ENCODE measurements at regions of chr20 and their contacts with region 1.

Region 1: GRCh38 chr20:33450867-33451266 is 7.3 kb upstream of the SNTA1 start:
- DNase-seq: no peak
- ATAC-seq: no peak

Region 2: DNA sequence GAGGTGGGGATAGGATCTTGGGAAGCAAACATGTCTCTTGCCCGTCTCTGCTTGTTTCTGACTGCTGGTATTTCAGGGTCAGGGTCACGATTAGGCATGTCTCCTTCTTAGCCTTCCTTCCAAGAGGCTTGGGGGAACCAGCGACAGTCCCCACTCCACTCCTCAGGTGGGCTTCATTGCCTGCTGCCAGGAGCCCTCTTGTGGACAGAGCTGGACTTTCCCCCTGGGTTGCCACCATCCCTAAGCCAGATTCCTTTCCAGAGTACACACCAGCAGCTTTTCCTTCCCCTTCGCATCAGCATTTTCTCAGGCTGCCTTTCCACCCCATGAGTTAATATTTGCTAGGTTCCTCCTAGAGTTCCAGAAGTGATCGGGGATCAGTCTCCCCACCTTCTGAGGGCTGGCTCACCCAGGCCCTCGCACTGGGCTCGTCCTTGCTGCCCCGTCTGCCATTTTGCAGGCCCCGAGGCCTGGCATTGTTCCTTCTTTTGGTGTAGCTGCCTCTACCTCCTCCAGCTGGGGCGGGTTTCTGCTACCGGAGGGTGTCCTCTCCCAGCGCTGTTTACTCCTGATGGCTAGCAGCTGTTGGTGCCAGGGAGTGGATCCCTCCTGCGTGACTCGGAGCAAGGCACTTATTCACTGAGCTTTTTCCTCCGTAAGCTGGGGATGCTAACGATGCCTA is 202.5 kb after region 1 on chr20:
- intact Hi-C with region 1: loop called (anchors 2 kb)
- DNase-seq: peak; percentile 67
- ATAC-seq: peak; percentile 52

Region 3: GRCh38 chr20:33667245-33668086 is 216.6 kb after region 1 on chr20:
- intact Hi-C with region 1: loop called (anchors 2 kb)
- DNase-seq: peak; percentile 87
- ATAC-seq: peak; percentile 59

Region 4: DNA sequence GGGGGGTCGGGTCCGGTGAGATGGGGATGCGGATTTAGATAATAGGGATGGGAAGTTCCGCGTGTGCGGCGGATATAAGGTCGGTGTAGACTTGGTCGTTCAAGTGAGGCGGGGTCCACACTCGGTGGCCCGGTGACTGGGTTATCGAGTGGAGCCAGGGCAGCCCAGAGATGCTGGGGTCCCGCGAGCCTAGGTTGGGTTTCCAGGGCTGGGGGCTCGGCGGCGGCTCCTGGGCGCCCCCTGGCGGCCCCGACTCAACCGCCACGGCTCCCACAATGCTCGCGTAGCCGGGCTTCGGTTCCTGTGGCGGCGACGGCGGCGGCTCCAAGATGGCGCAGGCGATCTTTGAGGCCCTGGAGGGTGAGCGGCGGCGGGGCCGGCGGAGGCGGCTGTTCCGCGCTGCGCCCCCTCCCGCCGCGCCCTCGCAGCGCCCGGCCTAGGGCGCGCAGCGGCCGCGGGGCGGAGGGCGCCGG is 280.9 kb after region 1 on chr20 and contains the start of gene ZNF341:
- intact Hi-C with region 1: loop called (anchors 10 kb)
- DNase-seq: peak; percentile 95
- ATAC-seq: peak; percentile 91
- total RNA-seq, gene ZNF341: 1.8 TPM

Measured in Right ventricle myocardium inferior (tissue), 1 donor.